ENCODE measurements at regions of chr10 and their contacts with region 1.

Region 1: DNA sequence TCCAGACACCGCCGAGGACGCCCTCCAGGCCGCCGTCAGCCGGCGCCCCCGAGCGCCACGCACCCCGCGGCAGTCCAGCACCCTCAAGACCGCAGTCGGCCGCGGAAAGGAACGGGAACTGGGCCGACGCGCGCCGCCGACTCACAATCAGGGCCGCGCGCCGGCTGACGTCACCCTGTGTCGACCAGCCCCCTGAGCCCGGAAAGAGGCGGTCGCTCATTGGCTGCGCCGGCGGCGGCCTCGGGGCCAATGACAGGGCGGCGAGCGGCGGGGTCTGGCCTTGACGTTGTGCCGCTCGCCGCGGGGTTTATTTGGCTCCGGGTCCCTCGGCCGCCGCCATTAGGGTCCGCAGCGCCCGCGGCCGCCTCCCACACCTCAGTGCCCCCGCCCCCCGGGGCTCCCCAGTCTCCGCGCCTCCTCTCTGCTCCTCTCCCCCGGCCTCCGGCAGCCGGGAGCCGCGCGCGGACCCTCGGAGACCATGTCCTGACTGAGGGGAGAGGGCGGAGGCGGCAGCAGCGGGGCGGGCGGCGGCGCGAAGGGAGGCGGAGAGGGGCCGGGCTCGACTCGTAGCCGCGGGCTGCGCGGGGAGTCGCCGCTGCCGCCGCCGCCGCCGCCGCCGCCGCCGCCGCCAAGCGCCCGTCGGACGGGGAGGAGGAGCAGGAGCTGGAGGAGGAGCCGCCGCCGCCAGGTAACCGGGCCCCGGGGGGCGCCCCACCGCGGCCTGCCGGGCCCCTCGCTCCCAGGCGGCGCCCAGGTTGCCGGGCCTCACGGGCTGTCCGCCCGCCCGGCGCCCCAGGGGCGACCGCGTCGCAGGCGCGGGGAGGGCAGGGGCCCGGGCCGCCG is 25.1 kb upstream of the ZRANB1 start:
- DNase-seq: peak; percentile 100
- H3K4me3 ChIP-seq: peak overlapping the region; percentile 93 to 98 (median 94)
- H3K27ac ChIP-seq: peak overlapping the region; percentile 98 to 100 (median 98)
- H3K4me1 ChIP-seq: peaks cover 43 to 55% (median 52%) of the 10 kb centered on the region in 4 donors
- H3K27me3 ChIP-seq: no peaks in the 10 kb centered on the region
- CTCF ChIP-seq: no peak
- EP300 ChIP-seq: no peak
- POLR2A ChIP-seq: peak; percentile 83

Region 2: GRCh38 chr10:124802313-124802675 is 114.5 kb before region 1 on chr10:
- intact Hi-C with region 1: loop called (anchors 5 kb)
- DNase-seq: no peak
- H3K4me3 ChIP-seq: peak overlapping the region; percentile 80 to 98 (median 88)
- H3K27ac ChIP-seq: peak overlapping the region in 3 of 4 donors; percentile 75 to 85 (median 84)
- H3K4me1 ChIP-seq: peaks cover 8 to 21% (median 17%) of the 10 kb centered on the region in 4 donors
- H3K27me3 ChIP-seq: no peaks in the 10 kb centered on the region
- CTCF ChIP-seq: no peak
- EP300 ChIP-seq: no peak
- POLR2A ChIP-seq: no peak

Region 3: DNA sequence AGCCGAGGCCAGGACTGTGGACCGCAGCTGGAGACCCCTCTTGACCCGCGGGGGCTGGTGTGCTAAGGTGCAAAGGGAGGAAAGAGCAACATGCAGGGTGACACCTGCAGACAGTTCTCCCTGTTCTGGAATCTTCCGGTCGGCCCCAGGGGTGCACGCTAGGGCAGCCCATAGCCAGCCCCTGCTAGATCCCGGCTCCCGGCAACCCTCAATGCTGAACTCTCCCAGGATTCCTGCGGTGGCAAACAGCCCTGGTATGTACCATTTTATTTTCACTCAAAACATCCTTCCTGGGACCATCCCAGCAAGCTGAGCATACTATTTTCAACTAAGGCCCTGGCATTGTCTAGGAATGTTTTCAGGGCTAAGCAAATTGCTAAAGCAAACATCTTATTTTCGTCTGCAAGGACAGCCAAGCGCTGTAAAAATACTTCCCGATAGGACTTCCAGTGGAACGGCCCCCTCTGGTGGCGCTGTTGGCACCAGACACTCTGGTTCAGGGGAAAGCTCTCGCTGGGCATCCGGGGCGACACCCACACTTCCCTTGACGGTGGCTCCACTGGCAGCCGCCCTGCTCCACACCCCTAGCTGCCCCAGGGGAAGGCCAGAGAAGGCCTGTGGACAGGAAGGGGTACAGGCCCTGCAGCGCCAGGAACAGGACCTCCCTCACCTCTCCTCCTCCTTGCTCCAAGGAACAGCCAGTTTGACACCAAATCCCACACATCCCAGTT is 144.2 kb after region 1 on chr10:
- intact Hi-C with region 1: loop called (anchors 10 kb)
- DNase-seq: peak; percentile 95
- H3K4me3 ChIP-seq: peak overlapping the region; percentile 10 to 30 (median 29)
- H3K27ac ChIP-seq: peak overlapping the region; percentile 85 to 87 (median 87)
- H3K4me1 ChIP-seq: peaks cover 99 to 100% (median 99%) of the 10 kb centered on the region in 4 donors
- H3K27me3 ChIP-seq: no peaks in the 10 kb centered on the region
- CTCF ChIP-seq: peak; percentile 83 to 91 (median 86)
- EP300 ChIP-seq: no peak
- POLR2A ChIP-seq: no peak